Left ventricle myocardium superior (tissue), 1 donor: ENCODE measurements at regions of chr4 and their contacts with region 1.

Region 1: DNA sequence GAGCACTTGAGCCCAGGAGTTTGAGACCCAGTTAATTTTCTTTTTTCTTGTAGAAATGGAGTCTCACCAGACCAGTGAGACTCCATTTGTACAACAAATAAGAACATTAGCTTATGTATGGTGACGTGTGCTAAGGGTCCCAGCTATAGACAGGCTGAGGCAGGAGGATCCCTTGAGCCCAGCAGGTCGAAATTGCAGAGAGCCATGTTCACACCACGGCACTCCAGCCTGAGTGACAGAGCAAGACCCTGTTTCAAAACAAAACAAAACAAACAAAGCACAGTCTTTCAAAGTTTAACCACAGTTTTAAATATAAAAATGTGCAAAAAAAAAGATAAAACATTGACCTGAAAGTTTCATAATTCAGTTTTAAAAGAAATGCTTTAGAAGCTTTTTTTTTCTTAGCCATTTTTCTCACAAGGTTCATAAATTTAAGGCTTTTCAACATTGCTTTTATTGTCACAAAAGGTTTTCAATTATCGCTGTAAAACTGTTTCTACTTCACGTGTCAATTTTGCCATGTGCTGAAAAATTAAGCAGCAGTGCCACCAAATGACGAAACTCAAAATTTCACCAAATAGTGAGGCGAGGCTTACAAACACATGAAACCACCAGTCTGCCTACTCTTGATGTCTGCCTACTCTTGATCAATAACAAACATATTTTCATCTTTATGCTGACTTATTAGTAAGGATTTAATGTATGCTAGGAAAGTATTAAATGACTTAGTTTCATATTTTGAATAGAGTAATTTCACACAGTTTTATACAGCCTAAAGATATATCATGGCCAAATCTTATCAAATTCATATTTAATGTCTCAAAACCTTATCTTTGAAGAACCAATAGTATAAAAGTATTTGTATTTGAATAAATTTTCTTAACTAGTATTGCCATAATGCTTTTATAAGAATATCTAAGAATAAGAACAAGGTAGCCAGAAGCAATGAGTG is 126.3 kb downstream of the NEK1 start:
- DNase-seq: no peak
- ATAC-seq: peak; percentile 47

Region 2: GRCh38 chr4:168995537-168996295 is 490.4 kb before region 1 on chr4:
- intact Hi-C with region 1: loop called (anchors 10 kb)
- DNase-seq: no peak
- ATAC-seq: peak; percentile 67

Region 3: GRCh38 chr4:169024762-169025161 is 461.3 kb before region 1 on chr4:
- intact Hi-C with region 1: loop called (anchors 10 kb)
- DNase-seq: no peak
- ATAC-seq: peak; percentile 86